Caco-2 (cell line): ENCODE measurements at regions of chr11 and their contacts with region 1.

Region 1: GRCh38 chr11:103601225-103601846 is 435.1 kb upstream of the DDI1 start:
- DNase-seq: peak; percentile 68 to 72
- H3K4me3 ChIP-seq: no peak overlapping the region
- H3K4me3 Mint-ChIP-seq: no peak overlapping the region
- H3K27ac Mint-ChIP-seq: no peak overlapping the region
- H3K4me1 ChIP-seq: no peaks in the 10 kb centered on the region
- H3K4me1 Mint-ChIP-seq: no peaks in the 10 kb centered on the region
- H3K27me3 ChIP-seq: no peaks in the 10 kb centered on the region
- H3K27me3 Mint-ChIP-seq: peaks cover 12% of the 10 kb centered on the region
- CTCF ChIP-seq: peak; percentile 97 to 98

Region 2: DNA sequence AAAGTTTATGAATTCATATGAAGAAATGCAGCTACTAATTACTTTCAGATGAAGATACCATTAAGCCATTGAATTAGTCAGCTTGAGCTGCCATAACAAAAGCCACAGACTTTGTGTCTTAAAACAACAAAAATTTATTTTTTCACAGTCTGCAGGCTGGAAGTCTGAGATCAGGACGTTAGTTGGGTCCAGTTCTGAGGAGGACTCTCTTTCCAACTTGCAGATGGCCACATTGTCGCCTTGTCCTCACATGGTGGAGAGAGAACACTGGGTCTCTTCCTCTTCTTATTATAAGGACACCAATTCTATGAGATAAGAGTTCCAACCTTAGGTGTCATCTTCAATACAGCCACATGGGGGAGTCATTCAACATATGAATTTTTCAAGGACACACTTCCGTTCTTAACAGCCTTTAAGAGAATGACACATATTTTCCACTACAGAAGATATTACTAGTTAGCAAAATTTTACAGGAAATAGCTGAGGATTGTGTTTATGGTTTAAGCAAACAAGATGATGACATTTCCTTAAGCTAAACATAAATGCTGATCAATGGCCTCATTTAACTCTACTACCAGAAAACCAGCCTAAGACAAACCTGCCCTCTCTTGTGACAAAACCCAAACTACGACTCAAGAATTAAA is 565.4 kb before region 1 on chr11:
- CTCF ChIA-PET with region 1: no interaction called
- POLR2A ChIA-PET with region 1: no interaction called
- intact Hi-C with region 1: loop called (anchors 10 kb)
- DNase-seq: peak; percentile 52 to 75
- H3K4me3 ChIP-seq: no peak overlapping the region
- H3K4me3 Mint-ChIP-seq: no peak overlapping the region
- H3K27ac Mint-ChIP-seq: no peak overlapping the region
- H3K4me1 ChIP-seq: no peaks in the 10 kb centered on the region
- H3K4me1 Mint-ChIP-seq: no peaks in the 10 kb centered on the region
- H3K27me3 ChIP-seq: no peaks in the 10 kb centered on the region
- H3K27me3 Mint-ChIP-seq: peaks cover 3% of the 10 kb centered on the region
- CTCF ChIP-seq: peak; percentile 78 to 85

Region 3: DNA sequence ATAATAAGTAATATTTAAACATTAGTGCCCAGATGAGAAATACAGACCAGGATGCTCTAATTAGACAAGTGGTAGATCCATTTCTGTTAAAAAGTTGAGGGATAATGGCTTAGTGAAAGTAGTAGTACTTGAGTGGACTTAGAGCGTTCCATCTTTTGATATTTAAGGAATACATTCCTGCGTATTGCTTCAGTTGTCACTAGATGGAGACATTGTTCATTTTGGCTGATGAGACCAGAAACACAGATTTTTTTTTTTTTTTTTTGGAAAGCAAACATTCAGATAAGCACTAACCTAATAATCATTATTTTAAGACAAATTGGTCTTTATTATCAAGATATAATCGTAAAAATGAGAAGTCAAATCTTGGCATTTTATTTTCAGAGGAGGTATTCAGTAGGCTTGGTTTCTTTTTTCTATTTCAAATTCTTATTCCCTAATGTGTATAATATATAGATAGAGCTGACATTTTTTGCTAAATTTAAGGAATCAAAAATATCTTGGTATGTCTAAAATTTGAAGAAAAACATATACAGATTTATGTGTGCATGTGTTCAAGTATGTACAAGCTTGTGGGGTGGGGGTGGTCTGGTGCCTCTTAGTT is 399.2 kb before region 1 on chr11:
- CTCF ChIA-PET with region 1: no interaction called
- POLR2A ChIA-PET with region 1: no interaction called
- intact Hi-C with region 1: loop called (anchors 1 kb)
- DNase-seq: peak in 1 of 2 experiments; percentile 47
- H3K4me3 ChIP-seq: no peak overlapping the region
- H3K4me3 Mint-ChIP-seq: no peak overlapping the region
- H3K27ac Mint-ChIP-seq: no peak overlapping the region
- H3K4me1 ChIP-seq: no peaks in the 10 kb centered on the region
- H3K4me1 Mint-ChIP-seq: no peaks in the 10 kb centered on the region
- H3K27me3 ChIP-seq: no peaks in the 10 kb centered on the region
- H3K27me3 Mint-ChIP-seq: no peaks in the 10 kb centered on the region
- CTCF ChIP-seq: peak; percentile 63 to 85

Region 4: GRCh38 chr11:103326070-103326794 is 275.1 kb before region 1 on chr11:
- CTCF ChIA-PET with region 1: no interaction called
- POLR2A ChIA-PET with region 1: no interaction called
- intact Hi-C with region 1: loop called (anchors 1 kb)
- DNase-seq: peak; percentile 50 to 76
- H3K4me3 ChIP-seq: no peak overlapping the region
- H3K4me3 Mint-ChIP-seq: no peak overlapping the region
- H3K27ac Mint-ChIP-seq: no peak overlapping the region
- H3K4me1 ChIP-seq: peaks cover 6% of the 10 kb centered on the region; the same call in 1 of the 2 replicates
- H3K4me1 Mint-ChIP-seq: peaks cover 12% of the 10 kb centered on the region
- H3K27me3 ChIP-seq: no peaks in the 10 kb centered on the region
- H3K27me3 Mint-ChIP-seq: no peaks in the 10 kb centered on the region
- CTCF ChIP-seq: peak; percentile 83 to 86

Region 5: DNA sequence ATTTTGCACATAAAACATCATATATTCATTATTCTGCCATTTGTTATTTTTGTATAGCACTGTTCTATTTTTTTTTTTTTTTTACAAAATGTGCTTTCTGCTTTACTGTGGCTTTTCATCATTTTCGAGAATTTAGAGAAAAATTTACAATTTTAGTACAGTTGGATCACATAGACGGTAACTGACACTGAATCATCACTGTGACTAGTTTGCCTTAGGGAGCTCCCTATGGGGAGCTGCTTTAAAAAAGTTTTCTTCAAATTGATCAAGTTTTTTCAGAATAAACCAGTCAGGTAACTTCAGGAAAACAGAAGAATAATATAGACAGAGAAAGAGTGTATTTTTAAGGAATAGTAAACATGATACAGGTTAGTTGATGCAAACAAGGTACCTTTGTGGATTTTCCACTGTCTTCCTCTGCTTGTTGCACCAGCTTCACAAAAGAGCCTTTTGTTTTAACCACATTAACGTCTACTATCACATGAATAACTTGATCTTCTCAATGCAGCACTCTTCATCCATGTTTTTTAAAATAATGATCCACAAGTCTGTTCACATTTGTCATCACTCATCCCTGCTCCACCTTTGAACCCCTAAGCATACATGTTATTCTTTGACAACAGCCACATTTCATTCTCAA is 165.1 kb before region 1 on chr11:
- CTCF ChIA-PET with region 1: no interaction called
- POLR2A ChIA-PET with region 1: no interaction called
- intact Hi-C with region 1: loop called (anchors 5 kb)
- DNase-seq: no peak
- H3K4me3 ChIP-seq: no peak overlapping the region
- H3K4me3 Mint-ChIP-seq: no peak overlapping the region
- H3K27ac Mint-ChIP-seq: no peak overlapping the region
- H3K4me1 ChIP-seq: no peaks in the 10 kb centered on the region
- H3K4me1 Mint-ChIP-seq: peaks cover 6% of the 10 kb centered on the region
- H3K27me3 ChIP-seq: no peaks in the 10 kb centered on the region
- H3K27me3 Mint-ChIP-seq: no peaks in the 10 kb centered on the region
- CTCF ChIP-seq: no peak

Region 6: GRCh38 chr11:103488031-103488461 is 113.3 kb before region 1 on chr11:
- CTCF ChIA-PET with region 1: interaction called, 3 read pairs
- POLR2A ChIA-PET with region 1: no interaction called
- intact Hi-C with region 1: loop called (anchors 5 kb)
- DNase-seq: no peak
- H3K4me3 ChIP-seq: no peak overlapping the region
- H3K4me3 Mint-ChIP-seq: no peak overlapping the region
- H3K27ac Mint-ChIP-seq: no peak overlapping the region
- H3K4me1 ChIP-seq: no peaks in the 10 kb centered on the region
- H3K4me1 Mint-ChIP-seq: no peaks in the 10 kb centered on the region
- H3K27me3 ChIP-seq: no peaks in the 10 kb centered on the region
- H3K27me3 Mint-ChIP-seq: no peaks in the 10 kb centered on the region
- CTCF ChIP-seq: no peak

Region 7: GRCh38 chr11:103633068-103633788 is 31.9 kb after region 1 on chr11:
- CTCF ChIA-PET with region 1: no interaction called
- POLR2A ChIA-PET with region 1: no interaction called
- intact Hi-C with region 1: no loop called
- DNase-seq: no peak
- H3K4me3 ChIP-seq: no peak overlapping the region
- H3K4me3 Mint-ChIP-seq: no peak overlapping the region
- H3K27ac Mint-ChIP-seq: no peak overlapping the region
- H3K4me1 ChIP-seq: peaks cover 10% of the 10 kb centered on the region
- H3K4me1 Mint-ChIP-seq: peaks cover 6% of the 10 kb centered on the region
- H3K27me3 ChIP-seq: no peaks in the 10 kb centered on the region
- H3K27me3 Mint-ChIP-seq: peaks cover 3% of the 10 kb centered on the region
- CTCF ChIP-seq: no peak